ENCODE measurements at regions of chr1 and their contacts with region 1.

Region 1: GRCh38 chr1:18597160-18598042 is 33.2 kb upstream of the PAX7 start:
- DNase-seq: peak; percentile 15 to 90
- H3K4me3 ChIP-seq: no peak overlapping the region
- H3K27ac ChIP-seq: no peak overlapping the region
- H3K4me1 ChIP-seq: peaks cover 0 to 2% (median under 1%) of the 10 kb centered on the region in 4 experiments; a peak in 1 of 7 replicates
- H3K27me3 ChIP-seq: peaks cover 0 to 11% (median 5%) of the 10 kb centered on the region in 4 experiments; a peak in 5 of 7 replicates
- CTCF ChIP-seq: peak; percentile 90 to 96 (median 95)
- EP300 ChIP-seq: no peak
- POLR2A ChIP-seq: no peak
- RAD21 ChIP-seq: peak; percentile 99 to 100

Region 2: GRCh38 chr1:18581420-18581880 is 16.0 kb before region 1 on chr1:
- CTCF ChIA-PET with region 1: interaction called, 33 read pairs
- POLR2A ChIA-PET with region 1: no interaction called
- DNase-seq: peak in 1 of 2 experiments; percentile 93
- H3K4me3 ChIP-seq: no peak overlapping the region
- H3K27ac ChIP-seq: no peak overlapping the region
- H3K4me1 ChIP-seq: no peaks in the 10 kb centered on the region; a peak in 1 of 7 replicates
- H3K27me3 ChIP-seq: peaks cover 0 to 2% (median 0%) of the 10 kb centered on the region in 4 experiments; a peak in 3 of 7 replicates
- CTCF ChIP-seq: peak; percentile 94 to 100 (median 96)
- EP300 ChIP-seq: no peak
- POLR2A ChIP-seq: no peak
- RAD21 ChIP-seq: peak; percentile 98 to 99

Region 3: DNA sequence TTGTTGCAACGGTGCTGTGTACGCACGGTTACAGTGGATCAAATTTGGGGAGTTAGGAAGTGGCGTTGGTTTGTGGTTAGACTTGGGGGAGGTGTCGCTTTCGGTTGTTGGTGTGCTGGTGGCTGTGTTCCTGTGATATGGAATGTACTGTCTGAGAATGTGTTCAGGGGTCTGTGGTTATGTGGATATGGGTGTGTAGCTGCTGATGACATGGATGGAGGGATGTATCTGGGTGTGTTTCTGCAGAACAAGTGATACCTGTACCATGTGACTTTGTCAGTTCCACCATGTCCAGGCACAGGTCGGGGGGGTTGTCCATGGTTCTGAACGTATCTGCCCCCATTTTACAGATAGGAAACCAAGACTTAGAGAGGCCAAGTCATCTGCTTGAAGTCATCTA is 56.0 kb after region 1 on chr1:
- CTCF ChIA-PET with region 1: interaction called, 13 read pairs
- POLR2A ChIA-PET with region 1: no interaction called
- DNase-seq: no peak
- H3K4me3 ChIP-seq: no peak overlapping the region
- H3K27ac ChIP-seq: no peak overlapping the region
- H3K4me1 ChIP-seq: peaks cover 28 to 54% (median 44%) of the 10 kb centered on the region in 4 experiments
- H3K27me3 ChIP-seq: peaks cover 37 to 90% (median 82%) of the 10 kb centered on the region in 4 experiments
- CTCF ChIP-seq: no peak
- EP300 ChIP-seq: no peak
- POLR2A ChIP-seq: no peak
- RAD21 ChIP-seq: no peak

Region 4: DNA sequence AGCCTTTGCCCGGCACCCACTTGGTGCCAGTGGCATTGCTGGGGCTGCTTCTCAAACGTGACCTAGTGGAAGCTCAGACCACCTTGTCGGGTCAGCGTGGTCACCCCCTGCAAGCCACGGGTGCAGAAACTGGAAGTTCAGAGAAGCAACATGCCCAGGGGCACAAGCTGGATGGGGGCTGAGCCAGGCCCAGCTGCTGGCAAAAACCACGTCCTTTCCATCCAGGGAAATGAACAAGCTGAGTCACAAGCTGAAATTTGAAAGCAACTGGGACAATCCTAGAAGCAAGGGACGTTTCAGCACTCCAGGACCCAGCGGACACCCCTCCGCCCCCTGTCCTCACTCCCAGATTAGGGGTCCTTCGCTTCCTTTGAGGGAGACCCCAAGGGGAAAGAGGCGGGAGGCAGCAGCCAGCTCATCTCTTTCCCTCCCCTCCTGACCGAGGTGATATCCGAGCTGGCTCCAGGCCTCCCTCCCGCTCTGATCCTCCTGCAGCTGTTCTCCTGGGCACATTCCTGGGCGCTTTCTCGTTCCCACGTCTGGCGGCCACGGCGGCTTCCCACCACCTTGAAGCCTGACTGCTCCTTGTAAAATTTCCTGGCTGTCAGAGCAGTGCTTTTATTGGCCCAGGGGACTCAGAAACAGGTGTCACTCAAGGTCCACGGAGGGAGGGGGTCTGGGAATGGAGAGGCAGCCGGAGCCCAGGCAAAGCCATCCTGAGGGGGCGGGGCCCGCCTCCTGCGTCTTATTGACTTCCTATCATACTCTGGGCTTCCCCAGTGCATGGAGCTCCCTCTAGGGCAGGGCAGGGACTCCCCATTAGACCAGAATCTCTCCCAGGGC is 96.1 kb after region 1 on chr1:
- CTCF ChIA-PET with region 1: interaction called, 123 read pairs
- POLR2A ChIA-PET with region 1: no interaction called
- DNase-seq: peak; percentile 49 to 89
- H3K4me3 ChIP-seq: peak overlapping the region; percentile 17 to 55 (median 26); a peak in 5 of 8 replicates
- H3K27ac ChIP-seq: no peak overlapping the region
- H3K4me1 ChIP-seq: peaks cover 0 to 10% (median 5%) of the 10 kb centered on the region in 4 experiments; a peak in 4 of 7 replicates
- H3K27me3 ChIP-seq: peaks cover 0 to 16% (median 5%) of the 10 kb centered on the region in 4 experiments; a peak in 5 of 7 replicates
- CTCF ChIP-seq: peak; percentile 21 to 28 (median 23)
- EP300 ChIP-seq: no peak
- POLR2A ChIP-seq: no peak
- RAD21 ChIP-seq: peak; percentile 20 to 53

Region 5: DNA sequence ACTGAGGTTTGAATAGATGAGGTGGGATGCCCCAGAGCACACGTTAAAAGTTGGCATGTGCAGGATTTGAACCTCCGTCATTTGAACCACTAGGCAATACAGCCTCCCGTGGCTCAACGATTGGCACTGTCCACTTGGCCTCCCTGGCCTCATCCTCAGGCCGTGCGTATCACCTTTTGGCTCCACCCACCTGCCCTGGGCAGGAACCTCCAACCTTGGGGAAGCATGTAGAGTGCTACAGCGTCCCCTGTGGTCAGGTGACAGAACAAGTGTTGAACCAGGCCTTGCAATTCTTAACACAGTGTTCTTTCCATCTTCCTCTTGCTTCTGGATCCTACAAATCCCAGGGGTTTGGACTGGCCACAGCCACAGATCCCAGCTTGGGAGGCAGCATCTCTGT is 145.8 kb after region 1 on chr1:
- CTCF ChIA-PET with region 1: interaction called, 20 read pairs
- POLR2A ChIA-PET with region 1: no interaction called
- DNase-seq: peak in 1 of 2 experiments; percentile 75
- H3K4me3 ChIP-seq: no peak overlapping the region
- H3K27ac ChIP-seq: no peak overlapping the region
- H3K4me1 ChIP-seq: no peaks in the 10 kb centered on the region
- H3K27me3 ChIP-seq: peaks cover 0 to 5% (median 1%) of the 10 kb centered on the region in 4 experiments; a peak in 5 of 7 replicates
- CTCF ChIP-seq: peak; percentile 82 to 94 (median 85)
- EP300 ChIP-seq: no peak
- POLR2A ChIP-seq: no peak
- RAD21 ChIP-seq: peak; percentile 82 to 86

Region 6: DNA sequence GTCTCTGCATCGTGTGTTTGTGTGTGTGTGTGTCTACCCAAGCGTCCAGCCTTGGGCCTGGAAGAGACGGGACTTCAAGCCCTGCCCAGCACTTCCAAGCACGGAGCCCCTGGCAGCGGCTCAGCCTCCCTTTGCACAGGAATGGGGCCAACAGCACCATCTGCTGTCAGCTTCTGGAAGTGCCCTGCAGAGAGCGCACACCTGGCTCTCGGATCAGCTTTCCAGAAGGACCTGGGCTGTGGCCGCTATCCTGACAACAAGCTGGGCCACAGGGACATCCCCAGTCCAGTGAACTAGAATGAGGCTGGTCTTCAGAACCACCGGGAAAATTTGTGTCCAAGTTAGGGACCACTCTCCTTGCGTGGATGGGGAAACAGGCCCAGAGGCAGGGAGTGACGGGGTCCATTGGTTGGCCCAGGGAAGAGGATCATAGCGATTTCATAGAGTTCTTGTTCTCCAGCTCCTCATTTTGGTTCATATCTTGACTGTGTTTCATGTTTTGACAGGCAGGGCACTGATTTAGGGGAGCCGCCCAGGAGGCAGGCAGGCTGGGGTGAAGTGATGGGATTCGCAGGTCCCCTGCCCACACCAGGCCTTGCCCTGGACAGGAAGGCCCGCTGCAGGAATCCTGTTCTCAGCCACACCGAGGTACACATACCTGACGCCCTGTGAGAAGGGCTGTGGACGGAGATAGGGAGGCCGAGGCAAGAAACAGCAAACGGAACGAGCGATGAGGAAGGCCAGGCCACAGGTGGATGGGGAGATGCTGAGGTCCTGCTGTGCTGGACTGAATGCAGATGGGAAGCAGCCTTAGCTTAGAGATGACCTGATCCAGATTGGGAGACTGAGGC is 223.6 kb after region 1 on chr1:
- CTCF ChIA-PET with region 1: interaction called, 132 read pairs
- POLR2A ChIA-PET with region 1: interaction called, 3 read pairs
- DNase-seq: peak; percentile 53 to 97
- H3K4me3 ChIP-seq: no peak overlapping the region
- H3K27ac ChIP-seq: no peak overlapping the region
- H3K4me1 ChIP-seq: peaks cover 3 to 10% (median 5%) of the 10 kb centered on the region in 4 experiments; a peak in 5 of 7 replicates
- H3K27me3 ChIP-seq: peaks cover 0 to 19% (median 15%) of the 10 kb centered on the region in 4 experiments; a peak in 6 of 7 replicates
- CTCF ChIP-seq: peak; percentile 93 to 99 (median 94)
- EP300 ChIP-seq: no peak
- POLR2A ChIP-seq: no peak
- RAD21 ChIP-seq: peak; percentile 96 to 97